ENCODE measurements at regions of chr18 and their contacts with region 1.

Region 1: GRCh38 chr18:63199743-63200241 is 119.8 kb downstream of the BCL2 start:
- DNase-seq: peak; percentile 54
- H3K4me3 Mint-ChIP-seq: no peak overlapping the region
- H3K27ac Mint-ChIP-seq: no peak overlapping the region
- H3K4me1 Mint-ChIP-seq: peaks cover 30% of the 10 kb centered on the region
- H3K27me3 Mint-ChIP-seq: no peaks in the 10 kb centered on the region

Region 2: DNA sequence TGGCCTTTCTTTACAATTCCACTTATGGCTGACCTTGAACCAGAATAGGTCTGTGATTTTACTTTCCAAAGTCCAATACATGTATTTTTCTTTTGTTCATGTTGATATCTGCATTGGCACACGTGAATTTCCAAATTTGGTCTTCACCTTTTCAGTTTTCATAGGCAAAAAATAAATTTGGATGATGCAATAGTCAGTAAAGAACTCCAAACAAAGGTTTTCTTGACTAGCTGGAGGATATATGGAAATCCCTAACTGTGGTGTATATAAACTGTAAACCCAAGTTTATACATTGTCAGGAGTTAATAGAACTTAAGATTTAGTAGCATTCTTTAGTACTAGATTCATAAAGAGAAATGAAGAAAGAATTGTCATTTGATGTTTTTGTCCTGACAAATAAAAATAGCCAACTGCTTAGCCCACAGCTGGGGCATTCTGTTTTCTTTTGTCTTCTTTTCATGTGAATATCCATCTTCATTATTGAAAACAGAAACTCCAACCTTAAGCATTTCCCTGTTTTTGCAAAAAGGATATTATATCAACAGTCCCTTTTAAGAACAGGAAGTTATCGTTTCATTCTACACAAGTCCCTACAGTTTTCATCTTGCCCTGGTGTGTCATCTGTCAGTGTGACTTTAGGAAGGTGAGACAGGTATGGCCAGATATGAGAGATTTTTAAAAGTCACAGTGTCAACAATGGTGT is 13.1 kb before region 1 on chr18:
- CTCF ChIA-PET with region 1: interaction called, 5 read pairs
- intact Hi-C with region 1: loop called (anchors 1 kb)
- DNase-seq: no peak
- H3K4me3 Mint-ChIP-seq: no peak overlapping the region
- H3K27ac Mint-ChIP-seq: peak overlapping the region; percentile 41
- H3K4me1 Mint-ChIP-seq: peaks cover 78% of the 10 kb centered on the region
- H3K27me3 Mint-ChIP-seq: no peaks in the 10 kb centered on the region

Measured in activated naive CD4-positive, alpha-beta T cell treated with anti-CD3 and anti-CD28 coated beads for 36 hours (primary cell).